ENCODE measurements at regions of chr5 and their contacts with region 1.

Region 1: DNA sequence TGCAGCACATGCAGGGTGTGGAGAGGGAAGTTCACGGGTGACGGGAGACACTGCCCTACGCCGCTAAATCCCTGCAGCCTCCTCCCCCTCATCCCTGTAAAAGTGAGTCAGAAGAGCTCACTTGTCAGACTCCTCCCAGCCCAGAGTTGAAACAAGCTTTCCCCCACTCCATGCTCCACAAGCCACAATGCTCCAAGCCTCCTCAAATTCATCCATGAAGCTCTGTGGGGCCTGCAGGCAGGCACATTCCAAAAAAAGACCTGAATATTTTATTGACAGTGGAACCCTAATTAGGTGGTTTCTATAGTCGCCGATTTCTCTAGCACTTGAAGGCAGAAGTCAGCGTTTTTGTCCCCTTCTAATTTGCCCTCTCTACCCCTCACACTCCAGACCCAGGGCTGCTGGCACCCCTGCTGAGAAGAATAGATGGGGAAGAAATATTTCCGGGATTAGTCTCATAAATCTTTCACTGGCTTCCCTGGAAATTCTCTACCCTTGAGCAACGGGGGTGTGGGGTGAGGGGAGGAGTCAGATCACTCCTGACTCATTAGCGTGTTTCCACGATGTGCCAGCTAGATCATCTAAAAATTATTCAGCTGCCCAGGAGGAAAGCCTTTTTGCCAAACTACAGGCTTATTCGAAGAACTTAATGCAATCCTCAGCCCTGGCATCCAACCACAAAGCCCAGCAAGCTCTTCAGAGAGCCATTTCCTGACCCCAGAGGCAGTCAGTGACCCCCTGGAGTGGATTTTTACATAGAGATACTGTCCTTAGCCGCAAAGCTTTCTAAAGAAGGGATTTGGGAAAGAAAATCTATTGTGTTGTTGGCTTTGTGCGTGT is 97.2 kb downstream of the ENC1 start:
- DNase-seq: peak; percentile 81 to 82
- ATAC-seq: peak; percentile 93
- H3K4me3 ChIP-seq: peak overlapping the region; percentile 5
- H3K27ac ChIP-seq: peak overlapping the region; percentile 78 to 85
- H3K4me1 ChIP-seq: peaks cover 49% of the 10 kb centered on the region
- CTCF ChIP-seq: no peak
- EP300 ChIP-seq: peak; percentile 70 to 82; a peak in 3 of 5 replicates
- POLR2A ChIP-seq: no peak
- RAD21 ChIP-seq: peak; percentile 6 to 54; a peak in 3 of 5 replicates

Region 2: DNA sequence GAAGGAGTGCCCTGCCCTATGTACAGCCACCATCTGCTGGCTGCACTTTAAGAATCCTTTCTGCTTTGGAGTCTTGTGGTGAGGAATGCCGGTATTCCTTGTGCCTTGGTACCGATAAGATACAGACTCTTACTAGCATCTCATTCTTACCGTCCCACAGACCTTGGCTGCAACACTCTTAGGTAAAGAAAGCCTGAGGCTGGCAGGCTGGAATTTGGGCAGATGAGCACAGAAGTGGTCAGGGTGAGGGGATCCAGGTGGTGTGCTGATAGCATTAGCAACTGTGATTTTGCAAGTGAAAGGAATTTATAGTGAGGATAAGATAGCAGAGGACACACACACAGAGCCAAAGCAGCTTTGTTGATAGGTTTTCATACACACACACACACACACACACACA is 100.9 kb before region 1 on chr5:
- CTCF ChIA-PET with region 1: no interaction called
- POLR2A ChIA-PET with region 1: no interaction called
- DNase-seq: no peak
- ATAC-seq: no peak
- H3K4me3 ChIP-seq: no peak overlapping the region
- H3K27ac ChIP-seq: no peak overlapping the region
- H3K4me1 ChIP-seq: no peaks in the 10 kb centered on the region
- CTCF ChIP-seq: no peak
- EP300 ChIP-seq: no peak
- POLR2A ChIP-seq: no peak
- RAD21 ChIP-seq: no peak

Region 3: DNA sequence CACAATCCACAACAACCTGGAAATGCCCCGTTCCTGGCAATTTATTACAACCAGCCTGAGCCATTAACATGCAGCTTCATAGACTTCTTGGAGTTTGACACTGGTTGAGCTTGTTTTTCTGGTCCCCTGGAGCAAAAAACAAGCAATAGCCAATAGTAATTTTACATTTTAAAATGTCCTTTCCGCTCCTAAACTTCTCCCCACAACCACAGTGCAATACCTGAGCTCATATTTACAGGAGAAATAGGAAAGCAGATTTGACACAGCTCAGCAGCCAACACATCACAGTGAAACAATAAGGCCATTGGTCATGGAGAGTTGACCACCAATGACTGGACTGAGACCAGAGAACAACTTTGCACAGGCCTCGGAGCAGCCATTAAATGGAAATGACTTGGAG is 24.1 kb after region 1 on chr5:
- CTCF ChIA-PET with region 1: no interaction called
- POLR2A ChIA-PET with region 1: no interaction called
- DNase-seq: no peak
- ATAC-seq: no peak
- H3K4me3 ChIP-seq: no peak overlapping the region
- H3K27ac ChIP-seq: no peak overlapping the region
- H3K4me1 ChIP-seq: no peaks in the 10 kb centered on the region
- CTCF ChIP-seq: no peak
- EP300 ChIP-seq: no peak
- POLR2A ChIP-seq: no peak
- RAD21 ChIP-seq: no peak

Region 4: DNA sequence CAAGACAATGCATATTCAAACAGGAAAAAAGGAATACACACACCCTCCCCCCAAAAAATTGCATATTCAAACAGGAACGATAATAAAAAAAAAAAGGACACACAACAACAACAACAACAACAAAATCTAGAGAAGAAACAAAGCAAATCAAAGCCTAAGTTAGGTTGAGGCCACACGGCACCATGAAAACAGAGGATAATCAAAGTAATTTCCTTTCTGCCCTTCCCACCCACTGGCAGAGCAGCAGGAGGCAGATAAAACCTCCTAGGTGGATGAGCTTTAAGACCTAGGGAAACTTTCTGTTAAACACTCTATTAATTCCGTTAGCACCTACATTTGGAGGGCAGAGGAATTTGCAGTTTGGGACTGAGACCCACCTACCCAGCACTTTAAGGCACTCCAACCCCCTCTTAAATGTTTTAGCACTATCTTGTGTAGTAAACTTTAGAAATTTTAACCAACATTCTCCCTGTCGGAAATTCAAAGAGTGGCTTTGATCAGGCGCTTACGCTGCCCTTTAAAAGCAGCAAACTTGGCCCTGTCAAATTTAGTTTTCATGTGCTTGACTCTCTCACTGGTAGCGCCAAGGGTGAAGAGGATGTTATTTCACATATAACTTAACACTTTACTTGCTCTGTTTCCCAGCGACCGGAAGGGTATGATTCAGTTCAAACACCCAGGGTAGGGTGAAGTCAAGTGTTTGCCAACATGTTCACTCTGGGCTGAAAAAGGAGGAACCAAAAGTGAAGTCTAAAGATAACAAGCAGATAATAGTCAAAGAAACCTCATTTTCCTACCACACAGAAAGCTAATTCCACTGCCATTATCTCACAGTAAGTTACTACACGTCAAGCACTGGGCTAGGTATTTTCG is 87.9 kb after region 1 on chr5:
- CTCF ChIA-PET with region 1: interaction called, 4 read pairs
- POLR2A ChIA-PET with region 1: interaction called, 12 read pairs
- DNase-seq: peak; percentile 57 to 78
- ATAC-seq: peak; percentile 81 to 88
- H3K4me3 ChIP-seq: peak overlapping the region; percentile 18
- H3K27ac ChIP-seq: peak overlapping the region; percentile 78 to 88
- H3K4me1 ChIP-seq: peaks cover 62% of the 10 kb centered on the region
- CTCF ChIP-seq: no peak
- EP300 ChIP-seq: no peak; a peak in 1 of 5 replicates
- POLR2A ChIP-seq: no peak
- RAD21 ChIP-seq: no peak; a peak in 1 of 5 replicates